Activated B cell treated with CpG ODN at 0.5 μM for 24 hours (primary cell): ENCODE measurements at regions of chrX and their contacts with region 1.

Region 1: GRCh38 chrX:149539283-149540130 is 1.3 kb upstream of the EOLA1 start:
- DNase-seq: peak; percentile 75
- ATAC-seq: peak; percentile 51
- H3K4me3 Mint-ChIP-seq: peak overlapping the region; percentile 85
- H3K27ac Mint-ChIP-seq: peak overlapping the region; percentile 85
- H3K4me1 Mint-ChIP-seq: peaks cover 15% of the 10 kb centered on the region
- H3K27me3 Mint-ChIP-seq: no peaks in the 10 kb centered on the region
- CTCF ChIP-seq: no peak

Region 2: GRCh38 chrX:148871422-148872160 is 667.9 kb before region 1 on chrX:
- CTCF ChIA-PET with region 1: no interaction called
- POLR2A ChIA-PET with region 1: no interaction called
- intact Hi-C with region 1: no loop called
- DNase-seq: no peak
- ATAC-seq: no peak
- H3K4me3 Mint-ChIP-seq: no peak overlapping the region
- H3K27ac Mint-ChIP-seq: no peak overlapping the region
- H3K4me1 Mint-ChIP-seq: no peaks in the 10 kb centered on the region
- H3K27me3 Mint-ChIP-seq: no peaks in the 10 kb centered on the region
- CTCF ChIP-seq: no peak

Region 3: DNA sequence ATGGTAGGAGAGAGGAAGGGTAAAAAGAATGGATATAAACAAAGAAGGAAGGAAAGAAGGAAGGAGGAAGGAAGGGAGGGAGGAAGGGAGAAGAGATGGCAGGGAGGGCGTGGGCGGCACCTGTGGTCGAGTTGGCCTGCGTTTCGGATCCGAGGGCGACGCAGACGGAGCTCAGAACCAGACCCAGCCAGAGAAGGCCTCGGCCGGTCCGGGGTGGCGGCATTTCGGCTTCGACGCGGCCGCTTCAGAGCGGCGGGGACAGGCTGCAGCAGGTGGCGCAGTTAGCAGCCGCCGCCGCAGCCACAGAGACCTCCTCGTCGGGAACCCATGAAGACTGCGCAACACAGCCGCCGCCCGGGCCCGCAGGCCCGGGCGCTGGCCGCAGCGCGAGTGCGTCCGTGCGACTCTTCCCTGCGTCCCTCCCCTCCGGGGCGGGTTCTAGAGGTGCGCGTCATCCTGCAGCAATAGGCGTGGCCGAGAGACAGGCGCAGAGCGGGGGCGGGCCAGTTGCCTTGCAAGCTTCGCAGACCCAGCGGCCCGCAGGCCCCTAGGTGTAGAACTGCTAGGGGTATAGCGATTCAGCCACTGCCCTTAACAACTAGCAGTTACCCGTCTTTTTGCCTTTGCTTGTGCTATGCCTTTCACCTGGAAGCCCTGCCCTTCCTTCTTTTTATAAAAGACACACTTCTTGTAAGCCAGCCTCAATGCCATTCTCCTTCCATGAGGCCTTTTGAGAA is 34.4 kb before region 1 on chrX and contains the start of gene IDS:
- CTCF ChIA-PET with region 1: no interaction called
- POLR2A ChIA-PET with region 1: interaction called, 47 read pairs
- intact Hi-C with region 1: loop called (anchors 1 kb)
- DNase-seq: peak; percentile 75
- ATAC-seq: peak; percentile 71
- H3K4me3 Mint-ChIP-seq: peak within 1 kb of the TSS; percentile 89
- H3K27ac Mint-ChIP-seq: peak within 1 kb of the TSS; percentile 96
- H3K4me1 Mint-ChIP-seq: peaks cover 10% of the 10 kb centered on the region
- H3K27me3 Mint-ChIP-seq: no peaks in the 10 kb centered on the region
- CTCF ChIP-seq: no peak
- total RNA-seq, gene IDS: 88.4 and 99.1 TPM in 2 replicates

Region 4: DNA sequence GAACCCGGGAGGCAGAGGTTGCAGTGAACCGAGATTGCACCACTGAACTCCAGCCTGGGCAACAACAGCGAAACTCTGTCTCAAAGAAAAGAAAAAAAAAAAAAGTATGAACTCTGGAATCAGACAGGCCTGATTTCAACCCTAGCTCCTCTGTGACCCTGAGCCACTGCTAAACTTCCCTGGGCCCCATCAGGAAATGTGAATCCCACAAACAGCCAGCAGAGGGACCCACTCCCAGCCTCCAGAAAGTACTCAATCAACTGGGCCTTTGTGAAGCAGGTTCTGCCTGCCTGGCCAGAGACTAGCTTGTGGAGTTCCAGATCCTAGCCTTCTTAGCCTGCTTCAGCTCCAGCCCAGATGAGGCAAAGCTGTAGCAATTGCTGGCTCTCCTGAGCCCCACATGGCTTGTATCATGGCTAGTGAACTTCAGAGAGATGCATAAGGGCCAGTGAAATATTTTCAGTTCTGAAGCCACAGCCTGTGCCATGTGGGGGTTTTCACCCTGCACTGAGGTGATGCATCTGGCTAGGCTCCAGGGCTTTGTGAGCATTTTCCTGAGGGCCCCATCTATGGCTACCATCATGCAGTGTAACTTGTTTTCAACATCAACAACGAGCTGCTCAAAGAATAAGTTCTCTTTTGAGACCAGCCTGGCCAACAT is 27.2 kb before region 1 on chrX:
- CTCF ChIA-PET with region 1: interaction called, 8 read pairs
- POLR2A ChIA-PET with region 1: interaction called, 16 read pairs
- intact Hi-C with region 1: loop called (anchors 1 kb)
- DNase-seq: no peak
- ATAC-seq: peak; percentile 95
- H3K4me3 Mint-ChIP-seq: no peak overlapping the region
- H3K27ac Mint-ChIP-seq: no peak overlapping the region
- H3K4me1 Mint-ChIP-seq: peaks cover 3% of the 10 kb centered on the region
- H3K27me3 Mint-ChIP-seq: no peaks in the 10 kb centered on the region
- CTCF ChIP-seq: no peak

Region 5: GRCh38 chrX:149527705-149528104 is 11.8 kb before region 1 on chrX:
- CTCF ChIA-PET with region 1: interaction called, 5 read pairs
- POLR2A ChIA-PET with region 1: interaction called, 26 read pairs
- intact Hi-C with region 1: loop called (anchors 1 kb)
- DNase-seq: no peak
- ATAC-seq: peak; percentile 33
- H3K4me3 Mint-ChIP-seq: no peak overlapping the region
- H3K27ac Mint-ChIP-seq: peak overlapping the region; percentile 70
- H3K4me1 Mint-ChIP-seq: peaks cover 22% of the 10 kb centered on the region
- H3K27me3 Mint-ChIP-seq: no peaks in the 10 kb centered on the region
- CTCF ChIP-seq: no peak